ENCODE measurements at regions of chr11 and their contacts with region 1.

Region 1: GRCh38 chr11:117946842-117947526 is 17.8 kb upstream of the TMPRSS13 start:
- DNase-seq: peak; percentile 87 to 94 (median 93)
- H3K4me3 ChIP-seq: no peak overlapping the region
- H3K27ac ChIP-seq: no peak overlapping the region
- H3K4me1 ChIP-seq: peaks cover 2% of the 10 kb centered on the region
- H3K27me3 ChIP-seq: no peaks in the 10 kb centered on the region
- CTCF ChIP-seq: peak; percentile 91 to 97 (median 94)
- EP300 ChIP-seq: no peak
- POLR2A ChIP-seq: no peak

Region 2: GRCh38 chr11:116579031-116579653 is 1367.8 kb before region 1 on chr11:
- intact Hi-C with region 1: no loop called
- DNase-seq: peak in 1 of 5 donors; percentile 54
- H3K4me3 ChIP-seq: no peak overlapping the region
- H3K27ac ChIP-seq: no peak overlapping the region
- H3K4me1 ChIP-seq: no peaks in the 10 kb centered on the region
- H3K27me3 ChIP-seq: no peaks in the 10 kb centered on the region
- CTCF ChIP-seq: no peak
- EP300 ChIP-seq: no peak
- POLR2A ChIP-seq: no peak

Region 3: GRCh38 chr11:117426269-117426685 is 520.7 kb before region 1 on chr11:
- intact Hi-C with region 1: loop called in 3 of 4 experiments (anchors 10 kb)
- DNase-seq: peak; percentile 62 to 82 (median 77)
- H3K4me3 ChIP-seq: no peak overlapping the region
- H3K27ac ChIP-seq: no peak overlapping the region
- H3K4me1 ChIP-seq: peaks cover 6% of the 10 kb centered on the region
- H3K27me3 ChIP-seq: no peaks in the 10 kb centered on the region
- CTCF ChIP-seq: peak; percentile 77 to 83 (median 78)
- EP300 ChIP-seq: no peak
- POLR2A ChIP-seq: no peak

Region 4: DNA sequence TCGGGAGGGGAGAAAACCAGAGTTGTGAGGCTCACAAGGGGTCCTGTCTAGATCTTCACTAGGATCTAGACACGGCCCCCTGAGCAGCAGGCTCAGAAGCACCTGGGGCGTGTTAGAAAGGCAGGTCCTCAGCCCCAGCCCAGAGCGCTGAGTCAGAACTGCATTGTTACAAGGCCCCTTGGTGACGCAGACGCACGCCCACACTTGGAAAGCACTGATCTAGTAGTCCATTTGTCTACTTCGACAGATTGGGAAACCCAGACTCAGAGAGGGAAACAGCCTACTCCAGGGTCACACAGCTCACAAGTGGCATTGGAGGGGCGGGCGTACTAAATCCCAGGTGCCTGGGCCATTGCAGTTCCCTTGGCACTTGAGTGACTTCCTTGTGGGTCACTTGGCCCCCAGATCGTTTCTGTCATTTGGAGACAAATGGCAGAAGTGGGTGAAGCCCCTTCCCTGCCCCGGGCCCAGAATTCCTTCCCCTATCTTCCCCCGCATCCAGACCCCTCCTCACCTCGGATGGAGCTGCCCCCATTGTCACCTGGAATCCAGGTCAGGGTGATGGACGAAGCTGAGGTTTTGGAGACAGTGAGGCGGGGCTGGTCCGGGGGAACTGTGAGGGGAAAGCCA is 508.5 kb before region 1 on chr11:
- intact Hi-C with region 1: loop called in 2 of 4 experiments (anchors 10 kb)
- DNase-seq: no peak
- H3K4me3 ChIP-seq: no peak overlapping the region
- H3K27ac ChIP-seq: no peak overlapping the region
- H3K4me1 ChIP-seq: no peaks in the 10 kb centered on the region
- H3K27me3 ChIP-seq: no peaks in the 10 kb centered on the region
- CTCF ChIP-seq: no peak
- EP300 ChIP-seq: no peak
- POLR2A ChIP-seq: no peak

Region 5: DNA sequence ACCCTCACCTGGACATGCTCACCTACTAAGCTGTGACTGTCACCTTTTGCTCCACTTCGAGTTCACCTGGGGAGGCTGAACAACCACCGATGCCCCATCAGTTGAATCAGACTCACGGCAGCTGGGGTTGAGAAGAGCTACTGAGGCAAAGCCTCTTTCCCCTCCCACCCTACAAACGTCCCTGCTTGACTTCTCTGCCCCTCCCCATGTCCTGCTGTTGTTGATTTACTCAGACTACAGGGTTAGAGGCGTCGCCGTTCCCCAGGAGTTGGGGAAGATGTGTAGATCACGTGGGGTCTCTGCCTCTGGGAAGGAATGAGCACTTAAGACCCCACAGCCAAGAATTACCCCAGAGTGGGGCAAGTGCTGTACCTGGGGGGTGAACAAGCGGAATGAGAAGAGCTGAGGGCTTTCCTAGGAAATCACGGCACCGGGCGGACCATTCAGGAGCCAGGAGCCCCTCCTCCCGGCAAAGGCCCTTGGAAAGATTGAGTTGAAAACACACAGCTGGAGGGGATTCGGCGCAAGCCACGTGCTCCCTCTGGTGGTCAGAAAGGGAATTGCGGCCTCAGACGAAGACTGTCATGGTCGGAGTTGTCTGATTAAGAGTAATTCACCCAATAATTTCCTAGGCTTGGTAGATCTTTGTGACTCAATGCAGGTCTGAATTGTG is 129.5 kb before region 1 on chr11:
- intact Hi-C with region 1: loop called in 1 of 4 experiments (anchors 5 kb)
- DNase-seq: peak; percentile 80 to 91 (median 90)
- H3K4me3 ChIP-seq: no peak overlapping the region
- H3K27ac ChIP-seq: no peak overlapping the region
- H3K4me1 ChIP-seq: peaks cover 3% of the 10 kb centered on the region
- H3K27me3 ChIP-seq: no peaks in the 10 kb centered on the region
- CTCF ChIP-seq: peak; percentile 90 to 98 (median 96)
- EP300 ChIP-seq: no peak
- POLR2A ChIP-seq: no peak

Region 6: DNA sequence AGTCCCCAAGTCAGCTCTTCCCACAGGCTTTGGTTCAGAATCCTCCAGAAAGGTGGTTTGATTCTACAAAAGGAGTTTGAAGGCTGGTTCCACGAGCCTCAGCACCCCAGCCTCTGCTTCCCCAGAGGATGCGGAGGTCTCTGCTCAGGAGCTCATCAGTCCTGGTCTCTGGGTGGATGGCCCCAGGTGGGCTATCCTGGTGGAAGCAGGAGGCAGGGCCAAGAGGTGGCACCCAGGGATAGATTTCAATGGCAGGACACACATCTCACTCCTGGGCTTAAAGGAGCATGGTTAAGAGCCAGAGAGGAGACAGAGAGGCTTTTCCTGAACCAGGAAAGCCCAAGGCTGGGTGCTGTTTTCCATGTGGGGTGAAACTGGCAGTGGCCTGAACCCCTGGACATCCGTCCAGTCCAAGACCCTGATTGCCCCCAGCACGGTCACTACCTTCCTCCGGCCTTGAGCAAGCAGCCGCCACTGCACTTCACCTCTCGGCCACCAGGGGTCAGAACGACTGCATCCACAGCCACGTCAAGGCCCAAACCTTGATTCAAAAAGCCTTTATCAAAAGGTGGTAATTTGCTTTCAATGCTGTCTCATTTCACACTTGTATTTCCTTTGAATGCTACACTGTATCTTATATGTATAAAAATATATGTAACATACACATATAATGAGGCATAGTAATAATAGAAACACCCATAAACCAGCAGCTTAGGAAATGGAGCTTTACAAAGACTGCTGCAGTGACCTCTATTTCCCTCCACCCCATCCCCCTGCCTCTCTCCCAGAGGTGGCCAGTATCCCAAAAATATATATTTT is 103.1 kb before region 1 on chr11:
- intact Hi-C with region 1: loop called (anchors 2 to 5 kb)
- DNase-seq: peak; percentile 78 to 90 (median 89)
- H3K4me3 ChIP-seq: no peak overlapping the region
- H3K27ac ChIP-seq: no peak overlapping the region
- H3K4me1 ChIP-seq: peaks cover 3% of the 10 kb centered on the region
- H3K27me3 ChIP-seq: no peaks in the 10 kb centered on the region
- CTCF ChIP-seq: peak; percentile 94 to 96 (median 96)
- EP300 ChIP-seq: no peak
- POLR2A ChIP-seq: peak; percentile 16

Measured in ovary (tissue), 10 donors.